ENCODE measurements at regions of chr1 and their contacts with region 1.

Region 1: GRCh38 chr1:203267347-203267846 is 37.9 kb upstream of the BTG2 start:
- DNase-seq: peak; percentile 62
- ATAC-seq: peak; percentile 59
- H3K4me3 Mint-ChIP-seq: peak overlapping the region; percentile 94
- H3K27ac Mint-ChIP-seq: peak overlapping the region; percentile 87
- H3K4me1 Mint-ChIP-seq: peaks cover 43% of the 10 kb centered on the region
- H3K27me3 Mint-ChIP-seq: no peaks in the 10 kb centered on the region
- CTCF ChIP-seq: peak; percentile 64

Region 2: DNA sequence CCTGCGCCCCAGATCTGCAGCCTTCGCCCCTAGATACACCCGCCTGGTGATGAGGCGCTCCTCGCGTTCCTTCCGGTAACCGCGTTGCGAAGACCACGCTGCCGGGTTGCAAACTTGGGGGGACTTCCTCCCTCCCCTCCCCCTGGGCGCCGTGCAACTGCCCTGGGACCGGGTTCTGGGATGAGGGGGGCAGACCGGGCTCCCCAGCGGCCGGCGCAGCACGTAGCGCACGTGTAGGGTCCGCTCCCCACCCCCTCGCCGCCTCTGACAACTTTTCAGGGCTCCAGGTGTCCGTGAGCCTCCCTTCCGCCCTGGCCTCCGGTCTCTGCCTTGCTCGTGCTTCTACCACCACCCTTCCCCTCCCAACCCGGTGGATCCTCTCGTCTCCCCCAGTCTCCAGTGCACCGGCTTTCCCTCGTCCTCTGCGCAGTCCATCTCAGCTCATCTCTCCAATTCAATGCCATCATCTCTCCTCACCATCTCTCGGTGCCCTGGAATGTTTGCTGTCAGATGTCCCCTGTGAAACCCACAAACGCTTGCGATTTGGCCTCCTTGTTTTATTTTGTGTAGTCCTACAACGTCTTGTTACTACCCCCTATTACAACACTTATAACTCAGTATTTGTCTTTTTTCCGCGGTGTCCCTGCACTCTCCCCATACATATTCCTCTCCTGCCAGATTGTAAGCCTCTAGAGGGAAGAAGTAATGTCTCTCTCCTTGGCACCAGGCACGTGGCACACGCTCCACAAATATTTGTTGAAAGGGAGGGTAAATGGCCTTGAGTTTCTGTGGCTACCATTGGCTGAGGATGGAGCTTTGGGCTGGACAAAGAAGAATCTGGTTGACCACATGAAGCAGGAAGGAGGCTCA is 455.9 kb before region 1 on chr1:
- CTCF ChIA-PET with region 1: no interaction called
- POLR2A ChIA-PET with region 1: no interaction called
- intact Hi-C with region 1: no loop called
- DNase-seq: peak; percentile 31
- ATAC-seq: no peak
- H3K4me3 Mint-ChIP-seq: peak overlapping the region; percentile 93
- H3K27ac Mint-ChIP-seq: peak overlapping the region; percentile 51
- H3K4me1 Mint-ChIP-seq: peaks cover 29% of the 10 kb centered on the region
- H3K27me3 Mint-ChIP-seq: no peaks in the 10 kb centered on the region
- CTCF ChIP-seq: no peak

Region 3: DNA sequence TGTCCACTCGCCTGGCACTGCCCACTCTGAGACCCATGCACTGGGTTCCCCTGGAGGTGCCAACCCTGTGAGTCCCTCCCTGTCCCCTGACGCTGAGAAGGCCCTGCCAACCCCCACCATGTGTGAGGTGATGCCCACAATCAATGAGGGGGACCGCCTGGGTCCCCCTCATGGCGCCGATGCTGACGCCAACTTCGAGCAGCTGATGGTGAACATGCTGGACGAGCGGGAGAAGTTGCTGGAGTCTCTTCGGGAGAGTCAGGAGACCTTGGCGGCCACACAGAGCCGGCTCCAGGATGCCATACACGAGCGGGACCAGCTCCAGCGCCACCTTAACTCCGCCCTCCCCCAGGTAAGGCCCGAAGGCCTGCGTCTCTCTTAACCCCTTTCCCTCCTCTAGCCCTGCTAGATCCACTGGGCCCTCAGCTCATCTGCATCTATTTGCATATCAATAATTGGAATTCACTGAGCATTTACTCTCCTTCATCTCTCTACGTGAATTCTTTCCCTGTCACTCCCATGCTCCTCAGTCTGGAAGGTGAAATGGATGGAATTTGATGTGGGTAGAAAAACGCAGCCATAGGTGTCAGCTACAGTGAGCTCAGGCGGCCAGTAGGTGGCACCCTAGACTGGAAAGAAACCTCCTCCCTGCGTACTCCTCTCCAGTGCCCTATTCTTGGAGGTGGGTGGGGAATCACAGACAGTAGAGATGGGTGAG is 228.3 kb before region 1 on chr1:
- CTCF ChIA-PET with region 1: interaction called, 29 read pairs
- POLR2A ChIA-PET with region 1: no interaction called
- intact Hi-C with region 1: loop called (anchors 1 kb)
- DNase-seq: peak; percentile 43
- ATAC-seq: peak; percentile 96
- H3K4me3 Mint-ChIP-seq: no peak overlapping the region
- H3K27ac Mint-ChIP-seq: no peak overlapping the region
- H3K4me1 Mint-ChIP-seq: peaks cover 3% of the 10 kb centered on the region
- H3K27me3 Mint-ChIP-seq: peaks cover 12% of the 10 kb centered on the region
- CTCF ChIP-seq: peak; percentile 95

Region 4: GRCh38 chr1:203320591-203321272 is 53.3 kb after region 1 on chr1:
- CTCF ChIA-PET with region 1: interaction called, 89 read pairs
- POLR2A ChIA-PET with region 1: interaction called, 1,942 read pairs
- intact Hi-C with region 1: no loop called
- DNase-seq: peak; percentile 53
- ATAC-seq: peak; percentile 66
- H3K4me3 Mint-ChIP-seq: peak overlapping the region; percentile 72
- H3K27ac Mint-ChIP-seq: peak overlapping the region; percentile 96
- H3K4me1 Mint-ChIP-seq: peaks cover 90% of the 10 kb centered on the region
- H3K27me3 Mint-ChIP-seq: no peaks in the 10 kb centered on the region
- CTCF ChIP-seq: no peak

Region 5: GRCh38 chr1:203381151-203381751 is 113.9 kb after region 1 on chr1:
- CTCF ChIA-PET with region 1: interaction called, 14 read pairs
- POLR2A ChIA-PET with region 1: no interaction called
- intact Hi-C with region 1: loop called (anchors 5 kb)
- DNase-seq: no peak
- ATAC-seq: peak; percentile 89
- H3K4me3 Mint-ChIP-seq: peak overlapping the region; percentile 59
- H3K27ac Mint-ChIP-seq: peak overlapping the region; percentile 88
- H3K4me1 Mint-ChIP-seq: peaks cover 53% of the 10 kb centered on the region
- H3K27me3 Mint-ChIP-seq: no peaks in the 10 kb centered on the region
- CTCF ChIP-seq: no peak

Region 6: DNA sequence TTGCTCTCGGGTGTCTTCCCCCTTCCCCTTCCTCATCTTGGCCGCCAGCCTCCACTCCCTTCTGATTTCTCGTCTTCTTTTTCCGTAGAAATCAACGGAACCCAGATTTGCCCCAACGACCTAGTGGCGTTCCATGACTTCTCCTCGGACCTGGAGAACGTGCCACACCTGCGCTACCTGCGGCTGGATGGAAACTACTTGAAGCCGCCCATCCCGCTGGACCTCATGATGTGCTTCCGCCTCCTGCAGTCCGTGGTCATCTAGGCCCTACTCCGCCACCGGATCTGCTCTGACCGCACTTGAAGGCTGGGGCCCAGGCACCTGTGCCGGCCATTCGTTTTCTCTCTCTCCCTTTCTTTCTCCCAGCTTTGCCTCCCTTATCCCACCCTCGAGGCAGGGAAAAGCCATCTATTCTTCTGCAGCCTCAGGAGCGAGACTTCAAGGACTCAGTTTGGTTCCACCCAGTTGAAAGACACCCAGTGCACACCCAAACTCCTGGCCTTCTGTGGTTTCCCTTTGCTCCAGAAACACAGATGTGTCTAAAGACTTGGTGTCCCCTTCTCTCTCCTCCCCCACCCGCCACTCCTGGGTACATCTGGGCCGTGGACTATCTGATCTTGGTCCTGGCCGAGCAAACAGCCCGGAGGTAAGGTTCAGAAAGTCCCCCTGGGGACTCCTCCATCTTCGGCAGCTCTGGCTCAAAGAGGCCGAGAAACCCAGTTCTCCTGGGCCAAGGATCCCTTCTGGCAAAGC is 219.4 kb after region 1 on chr1:
- CTCF ChIA-PET with region 1: interaction called, 116 read pairs
- POLR2A ChIA-PET with region 1: interaction called, 6 read pairs
- intact Hi-C with region 1: loop called (anchors 1 kb)
- DNase-seq: no peak
- ATAC-seq: no peak
- H3K4me3 Mint-ChIP-seq: peak overlapping the region; percentile 83
- H3K27ac Mint-ChIP-seq: no peak overlapping the region
- H3K4me1 Mint-ChIP-seq: peaks cover 5% of the 10 kb centered on the region
- H3K27me3 Mint-ChIP-seq: peaks cover 2% of the 10 kb centered on the region
- CTCF ChIP-seq: no peak

Region 7: GRCh38 chr1:203625628-203626019 is 358.2 kb after region 1 on chr1:
- CTCF ChIA-PET with region 1: interaction called, 5 read pairs
- POLR2A ChIA-PET with region 1: no interaction called
- intact Hi-C with region 1: loop called (anchors 5 kb)
- DNase-seq: no peak
- ATAC-seq: peak; percentile 48
- H3K4me3 Mint-ChIP-seq: peak overlapping the region; percentile 85
- H3K27ac Mint-ChIP-seq: peak overlapping the region; percentile 88
- H3K4me1 Mint-ChIP-seq: peaks cover 47% of the 10 kb centered on the region
- H3K27me3 Mint-ChIP-seq: no peaks in the 10 kb centered on the region
- CTCF ChIP-seq: no peak

Region 8: DNA sequence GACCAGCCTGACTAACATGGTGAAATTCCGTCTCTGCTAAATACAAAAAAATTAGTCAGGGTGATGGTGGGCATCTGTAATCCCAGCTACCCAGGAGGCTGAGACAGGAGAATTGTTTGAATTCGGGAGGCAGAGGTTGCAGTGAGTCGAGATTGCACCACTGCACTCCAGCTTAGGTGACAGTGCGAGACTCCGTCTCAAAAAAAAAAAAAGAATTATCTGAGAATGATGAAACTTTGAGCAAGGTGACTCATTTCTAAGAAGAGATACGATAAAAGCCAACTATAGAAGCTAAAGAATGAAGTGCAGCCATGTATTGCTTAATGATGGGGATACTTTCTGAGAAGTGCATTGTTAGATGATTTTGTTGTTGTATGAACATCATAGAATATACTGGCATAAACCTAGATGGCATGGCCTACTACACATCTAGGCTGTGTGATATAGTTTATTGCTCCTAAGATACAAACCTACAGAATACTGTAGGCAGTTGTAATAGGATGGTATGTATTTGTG is 658.7 kb after region 1 on chr1:
- CTCF ChIA-PET with region 1: no interaction called
- POLR2A ChIA-PET with region 1: no interaction called
- intact Hi-C with region 1: no loop called
- DNase-seq: no peak
- ATAC-seq: no peak
- H3K4me3 Mint-ChIP-seq: no peak overlapping the region
- H3K27ac Mint-ChIP-seq: no peak overlapping the region
- H3K4me1 Mint-ChIP-seq: no peaks in the 10 kb centered on the region
- H3K27me3 Mint-ChIP-seq: peaks cover 10% of the 10 kb centered on the region
- CTCF ChIP-seq: no peak